A549 (cell line): ENCODE measurements at regions of chr11 and their contacts with region 1.

Region 1: DNA sequence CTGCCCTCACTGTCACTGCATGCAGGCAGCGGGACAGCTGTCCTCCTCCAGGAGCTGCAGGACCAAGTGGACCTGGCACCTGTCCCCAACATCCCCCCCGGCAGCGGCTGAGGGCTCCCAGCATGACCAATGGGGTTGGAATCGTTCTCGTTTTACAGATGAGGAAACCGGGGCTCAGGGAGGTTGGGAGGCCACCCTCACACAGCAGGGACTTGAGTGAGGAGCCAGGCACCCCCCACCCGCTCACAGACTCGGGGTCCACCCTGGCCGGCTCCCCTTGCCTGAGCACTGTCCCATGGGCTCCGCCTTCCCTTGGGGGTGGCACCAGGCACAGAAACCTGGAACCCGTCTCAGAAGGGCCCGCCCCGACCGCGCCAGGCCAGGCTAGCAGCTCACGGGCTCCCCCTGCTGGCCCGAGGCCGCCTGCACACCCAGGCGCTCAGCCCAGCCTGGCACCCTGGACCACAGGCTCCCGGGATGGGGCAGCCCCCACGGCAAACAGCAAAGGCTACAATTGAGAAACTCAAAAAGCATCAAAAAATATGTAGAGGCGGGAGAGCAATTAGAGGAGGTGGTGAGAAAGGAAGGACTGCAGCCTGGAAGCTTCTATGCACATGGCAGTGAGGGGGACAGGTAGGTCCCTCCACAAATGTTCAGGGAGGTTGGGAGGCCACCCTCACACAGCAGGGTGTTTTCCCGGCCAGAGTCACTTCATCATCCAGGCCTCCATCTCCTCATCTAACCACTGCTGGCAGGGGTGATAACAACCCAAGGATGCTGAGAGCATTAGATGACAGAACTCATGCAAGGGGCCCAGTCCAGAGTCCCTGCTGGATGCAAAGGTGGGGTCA is 12.8 kb downstream of the MACROD1 start:
- DNase-seq: peak; percentile 45 to 94
- ATAC-seq: peak; percentile 81 to 95
- H3K4me3 ChIP-seq: no peak overlapping the region
- H3K27ac ChIP-seq: no peak overlapping the region
- H3K4me1 ChIP-seq: no peaks in the 10 kb centered on the region
- CTCF ChIP-seq: peak; percentile 93
- EP300 ChIP-seq: no peak
- POLR2A ChIP-seq: no peak
- RAD21 ChIP-seq: peak; percentile 72 to 79

Region 2: GRCh38 chr11:63768237-63769043 is 384.6 kb before region 1 on chr11 and contains the start of gene ZFTA:
- CTCF ChIA-PET with region 1: interaction called, 22 read pairs
- POLR2A ChIA-PET with region 1: no interaction called
- DNase-seq: peak; percentile 51 to 68
- ATAC-seq: peak; percentile 50 to 59
- H3K4me3 ChIP-seq: peak within 1 kb of the TSS; percentile 63
- H3K27ac ChIP-seq: peak within 1 kb of the TSS; percentile 89 to 99
- H3K4me1 ChIP-seq: peaks cover 30% of the 10 kb centered on the region
- CTCF ChIP-seq: peak; percentile 95
- EP300 ChIP-seq: no peak
- POLR2A ChIP-seq: no peak
- RAD21 ChIP-seq: peak; percentile 34 to 81; a peak in 4 of 5 replicates
- polyA plus RNA-seq, gene ZFTA: 2.4 and 3.0 TPM in 2 replicates

Region 3: GRCh38 chr11:64007629-64008282 is 145.3 kb before region 1 on chr11:
- CTCF ChIA-PET with region 1: interaction called, 46 read pairs
- POLR2A ChIA-PET with region 1: no interaction called
- DNase-seq: peak; percentile 86
- ATAC-seq: peak; percentile 67 to 82
- H3K4me3 ChIP-seq: peak overlapping the region; percentile 42
- H3K27ac ChIP-seq: peak overlapping the region; percentile 74 to 83
- H3K4me1 ChIP-seq: peaks cover 46% of the 10 kb centered on the region
- CTCF ChIP-seq: no peak
- EP300 ChIP-seq: no peak
- POLR2A ChIP-seq: no peak; the same call in 1 of the 2 replicates
- RAD21 ChIP-seq: no peak

Region 4: DNA sequence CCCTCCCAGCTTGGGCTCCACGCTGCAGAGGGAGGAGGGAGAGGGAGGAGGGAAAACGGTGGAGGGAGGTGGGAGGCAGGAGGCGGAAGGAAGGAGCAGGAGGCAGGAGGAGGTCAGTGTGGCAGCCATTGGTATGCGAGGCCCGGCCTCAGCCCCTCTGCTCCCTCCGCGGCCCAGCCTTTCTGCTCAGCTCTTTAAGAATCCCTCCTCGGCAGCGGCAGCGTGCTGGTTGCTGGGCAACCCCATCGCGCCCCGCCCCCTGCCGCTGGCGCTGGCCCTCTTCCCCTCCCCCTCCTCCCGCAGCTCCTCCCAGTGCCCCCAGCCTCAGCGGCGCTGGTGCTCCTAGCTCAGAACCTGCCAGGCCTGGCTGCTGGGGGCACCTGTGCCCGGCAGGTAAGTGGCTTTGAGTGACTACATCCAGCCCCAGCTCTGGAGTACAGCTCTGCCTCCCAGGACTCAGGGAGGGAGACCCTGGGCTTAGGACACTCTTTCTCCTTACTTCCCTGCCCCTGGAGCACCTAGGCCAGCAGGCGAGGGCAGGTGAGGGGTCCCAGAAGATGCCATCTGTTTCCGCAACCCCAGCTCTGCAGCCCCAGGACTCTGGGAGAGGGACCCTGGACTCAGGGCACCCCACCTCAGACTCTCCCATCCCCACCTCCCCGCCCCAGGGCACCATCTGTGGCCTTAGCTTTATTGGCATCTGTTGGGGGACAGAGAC is 124.5 kb before region 1 on chr11:
- CTCF ChIA-PET with region 1: interaction called, 16 read pairs
- POLR2A ChIA-PET with region 1: no interaction called
- DNase-seq: no peak
- ATAC-seq: no peak
- H3K4me3 ChIP-seq: no peak overlapping the region
- H3K27ac ChIP-seq: no peak overlapping the region
- H3K4me1 ChIP-seq: peaks cover 8% of the 10 kb centered on the region
- CTCF ChIP-seq: no peak
- EP300 ChIP-seq: no peak
- POLR2A ChIP-seq: no peak
- RAD21 ChIP-seq: no peak

Region 5: GRCh38 chr11:64060861-64061444 is 92.1 kb before region 1 on chr11:
- CTCF ChIA-PET with region 1: interaction called, 11 read pairs
- POLR2A ChIA-PET with region 1: no interaction called
- DNase-seq: peak; percentile 34 to 74
- ATAC-seq: peak; percentile 54 to 79; a peak in 5 of 6 replicates
- H3K4me3 ChIP-seq: peak overlapping the region; percentile 40
- H3K27ac ChIP-seq: peak overlapping the region; percentile 51 to 76; a peak in 5 of 6 replicates
- H3K4me1 ChIP-seq: peaks cover 8% of the 10 kb centered on the region; the same call in 2 of the 3 replicates
- CTCF ChIP-seq: no peak
- EP300 ChIP-seq: no peak
- POLR2A ChIP-seq: peak; percentile 34; the same call in 1 of the 2 replicates
- RAD21 ChIP-seq: no peak

Region 6: DNA sequence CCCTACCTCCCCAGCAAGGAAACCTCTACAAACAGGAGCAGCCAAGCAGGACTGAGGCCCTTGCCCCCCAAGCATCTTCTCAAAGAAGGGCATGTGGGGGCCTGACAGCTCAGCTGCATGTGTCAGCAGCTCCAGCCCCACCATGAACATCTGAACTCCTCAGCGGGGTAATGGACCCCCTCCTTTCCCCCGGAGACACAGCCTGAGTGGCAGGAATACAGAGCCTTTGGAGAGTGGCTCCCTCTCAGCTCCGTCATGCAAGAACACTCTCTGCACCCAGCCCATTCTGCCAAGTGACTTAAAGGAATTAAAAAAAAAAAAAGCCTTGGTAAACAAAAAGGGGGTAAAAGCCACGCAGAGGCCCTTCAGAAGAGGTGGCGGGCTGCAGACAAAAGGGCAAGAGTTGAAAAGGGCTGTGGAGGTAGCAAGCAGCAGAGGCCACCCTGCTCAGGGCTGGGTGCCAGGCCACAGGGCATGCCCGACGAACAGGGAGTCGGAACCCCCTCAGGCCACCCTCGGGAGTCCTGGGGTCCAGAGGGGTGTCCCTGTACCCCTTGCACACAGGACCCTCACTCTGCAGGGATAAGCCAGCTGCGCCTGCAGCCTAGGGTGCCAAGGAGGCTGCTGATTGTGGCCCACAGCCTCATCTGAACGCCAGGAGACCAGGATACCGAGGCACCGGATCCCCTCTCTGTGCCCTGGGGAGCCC is 49.6 kb before region 1 on chr11:
- CTCF ChIA-PET with region 1: interaction called, 12 read pairs
- POLR2A ChIA-PET with region 1: no interaction called
- DNase-seq: no peak
- ATAC-seq: no peak
- H3K4me3 ChIP-seq: no peak overlapping the region
- H3K27ac ChIP-seq: no peak overlapping the region
- H3K4me1 ChIP-seq: no peaks in the 10 kb centered on the region
- CTCF ChIP-seq: no peak
- EP300 ChIP-seq: no peak
- POLR2A ChIP-seq: no peak
- RAD21 ChIP-seq: no peak

Region 7: DNA sequence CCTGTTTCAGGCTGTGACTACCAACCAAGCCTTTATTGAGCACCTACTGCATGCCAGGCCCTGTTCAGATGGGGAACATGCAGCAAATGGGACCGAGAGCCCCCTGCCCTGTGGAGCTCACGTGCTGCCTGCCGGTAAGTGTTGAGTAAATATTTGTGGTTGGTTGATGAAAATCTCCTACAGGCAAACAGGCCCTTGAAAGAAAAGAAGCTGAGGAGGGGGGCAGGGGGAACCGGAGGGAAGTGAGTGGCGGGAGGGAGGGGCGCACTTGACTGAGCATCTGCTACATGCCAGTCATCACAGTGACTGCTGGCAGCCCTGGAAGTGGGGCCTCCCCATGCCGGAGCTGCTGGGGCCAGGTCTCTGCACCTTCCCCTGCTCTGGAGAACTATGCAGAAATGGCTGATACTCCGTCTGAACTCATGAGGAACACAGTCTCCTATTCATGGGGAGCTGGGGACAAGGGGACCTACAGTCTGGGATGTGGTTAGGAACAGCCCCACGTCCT is 21.3 kb before region 1 on chr11:
- CTCF ChIA-PET with region 1: interaction called, 180 read pairs
- POLR2A ChIA-PET with region 1: no interaction called
- DNase-seq: no peak
- ATAC-seq: no peak
- H3K4me3 ChIP-seq: no peak overlapping the region
- H3K27ac ChIP-seq: no peak overlapping the region
- H3K4me1 ChIP-seq: peaks cover 5% of the 10 kb centered on the region; the same call in 2 of the 3 replicates
- CTCF ChIP-seq: no peak
- EP300 ChIP-seq: no peak
- POLR2A ChIP-seq: no peak
- RAD21 ChIP-seq: no peak

Region 8: DNA sequence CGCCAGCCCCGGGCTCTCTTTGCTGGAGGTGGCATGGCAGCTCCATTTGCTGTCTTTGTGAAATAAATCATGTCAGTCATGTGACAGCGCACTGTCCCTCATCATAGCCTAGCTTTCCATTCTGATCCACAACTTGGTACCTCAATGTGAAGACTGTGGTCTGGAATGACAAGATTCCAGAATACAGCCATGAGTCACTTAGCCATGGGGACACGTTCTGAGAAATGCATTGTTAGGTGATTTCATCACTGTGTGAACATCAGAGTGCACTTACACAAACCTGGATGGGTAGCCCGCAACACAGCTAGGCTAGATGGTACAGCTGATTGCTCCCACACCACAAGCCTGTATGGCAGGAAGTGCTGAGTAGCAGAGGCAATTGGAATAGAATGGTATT is 233.2 kb after region 1 on chr11:
- CTCF ChIA-PET with region 1: no interaction called
- POLR2A ChIA-PET with region 1: no interaction called
- DNase-seq: peak in 1 of 2 experiments; percentile 39
- ATAC-seq: no peak
- H3K4me3 ChIP-seq: no peak overlapping the region
- H3K27ac ChIP-seq: no peak overlapping the region
- H3K4me1 ChIP-seq: peaks cover 7% of the 10 kb centered on the region; the same call in 1 of the 3 replicates
- CTCF ChIP-seq: no peak
- EP300 ChIP-seq: no peak
- POLR2A ChIP-seq: no peak
- RAD21 ChIP-seq: no peak